CD8-positive, alpha-beta T cell (primary cell): ENCODE measurements at regions of chr18 and their contacts with region 1.

Region 1: GRCh38 chr18:35972197-35973052 is at the start of gene RMP24:
- DNase-seq: peak; percentile 88 to 97 (median 93)
- ATAC-seq: peak; percentile 84
- H3K4me3 ChIP-seq: peak within 1 kb of the TSS; percentile 60 to 89
- H3K4me3 Mint-ChIP-seq: peak within 1 kb of the TSS; percentile 94
- H3K27ac ChIP-seq: peak within 1 kb of the TSS; percentile 57 to 90
- H3K27ac Mint-ChIP-seq: peak within 1 kb of the TSS; percentile 98
- H3K4me1 ChIP-seq: peaks cover 35% of the 10 kb centered on the region
- H3K4me1 Mint-ChIP-seq: peaks cover 65% of the 10 kb centered on the region
- H3K27me3 ChIP-seq: no peaks in the 10 kb centered on the region
- H3K27me3 Mint-ChIP-seq: no peaks in the 10 kb centered on the region
- CTCF ChIP-seq: no peak

Region 2: GRCh38 chr18:35290073-35290735 is 682.2 kb before region 1 on chr18 and contains the start of gene ZSCAN30:
- CTCF ChIA-PET with region 1: no interaction called
- POLR2A ChIA-PET with region 1: interaction called, 5 read pairs
- intact Hi-C with region 1: loop called (anchors 2 kb)
- DNase-seq: peak; percentile 92 to 98 (median 96)
- ATAC-seq: peak; percentile 94
- H3K4me3 ChIP-seq: peak within 1 kb of the TSS; percentile 78 to 82
- H3K4me3 Mint-ChIP-seq: peak within 1 kb of the TSS; percentile 99
- H3K27ac ChIP-seq: peak within 1 kb of the TSS; percentile 69 to 85
- H3K27ac Mint-ChIP-seq: peak within 1 kb of the TSS; percentile 99
- H3K4me1 ChIP-seq: peaks cover 17% of the 10 kb centered on the region
- H3K4me1 Mint-ChIP-seq: peaks cover 70% of the 10 kb centered on the region
- H3K27me3 ChIP-seq: no peaks in the 10 kb centered on the region
- H3K27me3 Mint-ChIP-seq: no peaks in the 10 kb centered on the region
- CTCF ChIP-seq: no peak
- total RNA-seq, gene ZSCAN30: 6.2 to 6.3 TPM

Region 3: DNA sequence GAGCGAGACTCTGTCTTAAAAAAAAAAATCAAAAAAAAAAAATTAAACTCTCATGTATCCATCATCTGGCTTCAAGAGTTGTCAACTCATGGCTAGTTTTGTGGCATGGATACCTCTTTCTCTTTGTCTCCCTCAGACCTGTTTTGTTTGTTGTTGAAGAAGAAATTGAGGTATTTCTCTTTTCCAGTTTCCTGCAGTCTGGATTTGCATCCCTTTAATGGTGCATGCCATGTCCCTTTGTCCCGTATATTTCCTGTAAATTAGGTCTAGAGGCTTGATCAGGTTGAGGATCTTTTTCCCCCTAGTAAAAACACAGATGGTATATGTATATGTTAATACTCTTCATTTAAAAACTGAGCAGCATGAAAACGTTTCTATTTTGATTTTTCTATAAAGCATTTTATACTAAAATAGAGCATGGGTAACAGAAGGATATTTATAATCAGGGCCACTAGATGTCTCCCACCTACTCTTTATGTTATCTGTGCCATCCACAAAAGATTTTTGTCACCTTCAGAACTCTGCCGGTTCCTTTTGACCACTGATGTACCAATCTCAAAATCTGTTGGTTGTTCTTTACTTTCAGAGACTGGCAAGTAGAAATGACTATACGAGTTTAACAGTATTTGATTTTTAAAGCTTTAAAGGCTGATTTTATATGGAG is 310.8 kb before region 1 on chr18:
- CTCF ChIA-PET with region 1: no interaction called
- POLR2A ChIA-PET with region 1: no interaction called
- intact Hi-C with region 1: no loop called
- DNase-seq: no peak
- ATAC-seq: no peak
- H3K4me3 ChIP-seq: no peak overlapping the region
- H3K4me3 Mint-ChIP-seq: no peak overlapping the region
- H3K27ac ChIP-seq: no peak overlapping the region
- H3K27ac Mint-ChIP-seq: no peak overlapping the region
- H3K4me1 ChIP-seq: no peaks in the 10 kb centered on the region
- H3K4me1 Mint-ChIP-seq: no peaks in the 10 kb centered on the region
- H3K27me3 ChIP-seq: no peaks in the 10 kb centered on the region
- H3K27me3 Mint-ChIP-seq: no peaks in the 10 kb centered on the region
- CTCF ChIP-seq: no peak

Region 4: DNA sequence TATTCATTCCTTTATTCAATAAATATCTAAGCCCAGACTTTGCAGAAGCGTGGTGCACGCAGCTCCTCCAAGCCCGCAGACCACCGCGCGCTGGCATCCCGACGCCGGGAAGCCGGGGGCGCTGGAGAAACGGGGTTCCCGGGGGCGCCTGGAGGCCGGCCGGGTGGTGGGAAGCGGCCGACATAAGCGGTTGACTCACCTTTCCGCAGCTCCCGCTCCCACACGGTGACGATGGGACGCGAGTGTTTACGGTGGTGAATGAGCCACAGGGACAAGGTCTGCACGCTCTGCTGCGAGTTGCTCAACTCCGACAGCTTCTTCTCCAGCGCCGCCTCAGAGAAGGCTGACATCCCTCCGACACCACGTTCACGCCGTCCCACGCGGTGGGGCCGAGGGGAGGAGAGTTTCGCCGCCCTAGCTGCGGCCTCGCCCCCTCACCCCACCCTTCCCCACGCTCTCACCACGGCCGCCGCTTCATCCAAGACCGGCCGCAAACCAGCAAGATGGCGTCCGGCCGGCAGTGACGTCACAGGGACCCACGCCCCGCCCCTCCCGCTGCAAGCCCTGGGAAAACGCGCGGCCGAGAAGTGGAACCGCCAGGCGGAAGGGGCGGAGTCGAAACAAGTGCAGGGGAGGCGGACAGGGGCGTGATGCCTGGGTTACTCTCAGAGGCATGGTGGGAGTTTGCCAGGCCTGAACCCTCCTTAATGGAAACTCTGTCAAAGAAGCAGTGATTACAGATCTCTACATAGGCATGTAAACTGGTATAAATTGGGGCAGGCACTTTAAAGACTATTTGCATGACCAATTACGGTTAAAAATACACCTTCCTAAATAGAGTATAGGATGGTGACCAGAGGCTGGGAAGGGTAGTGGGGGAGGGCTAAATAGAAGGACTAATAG is 94.9 kb after region 1 on chr18 and contains the start of gene RPRD1A:
- CTCF ChIA-PET with region 1: no interaction called
- POLR2A ChIA-PET with region 1: interaction called, 10 read pairs
- intact Hi-C with region 1: loop called (anchors 1 kb)
- DNase-seq: peak; percentile 92 to 99 (median 97)
- ATAC-seq: peak; percentile 93
- H3K4me3 ChIP-seq: peak within 1 kb of the TSS; percentile 95 to 98
- H3K4me3 Mint-ChIP-seq: peak within 1 kb of the TSS; percentile 94
- H3K27ac ChIP-seq: peak within 1 kb of the TSS; percentile 88 to 89
- H3K27ac Mint-ChIP-seq: peak within 1 kb of the TSS; percentile 96
- H3K4me1 ChIP-seq: peaks cover 29% of the 10 kb centered on the region
- H3K4me1 Mint-ChIP-seq: peaks cover 46% of the 10 kb centered on the region
- H3K27me3 ChIP-seq: no peaks in the 10 kb centered on the region
- H3K27me3 Mint-ChIP-seq: peaks cover 3% of the 10 kb centered on the region
- CTCF ChIP-seq: no peak
- total RNA-seq, gene RPRD1A: 13.8 to 15.8 TPM